ENCODE measurements at regions of chr6 and their contacts with region 1.

Region 1: GRCh38 chr6:36912586-36912985 is 26.8 kb downstream of the C6orf89 start:
- DNase-seq: peak; percentile 72
- H3K4me3 Mint-ChIP-seq: peak overlapping the region; percentile 5
- H3K27ac Mint-ChIP-seq: peak overlapping the region; percentile 71
- H3K4me1 Mint-ChIP-seq: peaks cover 40% of the 10 kb centered on the region
- H3K27me3 Mint-ChIP-seq: no peaks in the 10 kb centered on the region

Region 2: GRCh38 chr6:36874443-36875249 is 37.9 kb before region 1 on chr6 and contains the start of gene PPIL1:
- CTCF ChIA-PET with region 1: no interaction called
- intact Hi-C with region 1: no loop called
- DNase-seq: peak; percentile 88
- H3K4me3 Mint-ChIP-seq: peak within 1 kb of the TSS; percentile 94
- H3K27ac Mint-ChIP-seq: peak within 1 kb of the TSS; percentile 98
- H3K4me1 Mint-ChIP-seq: peaks cover 39% of the 10 kb centered on the region
- H3K27me3 Mint-ChIP-seq: peaks cover 8% of the 10 kb centered on the region
- total RNA-seq, gene PPIL1: 42.8 to 44.0 TPM

Region 3: GRCh38 chr6:36885461-36886401 is 26.9 kb before region 1 on chr6 and contains the start of gene C6orf89:
- CTCF ChIA-PET with region 1: interaction called, 9 read pairs
- intact Hi-C with region 1: loop called (anchors 1 kb)
- DNase-seq: peak; percentile 99
- H3K4me3 Mint-ChIP-seq: peak within 1 kb of the TSS; percentile 87
- H3K27ac Mint-ChIP-seq: peak within 1 kb of the TSS; percentile 92
- H3K4me1 Mint-ChIP-seq: peaks cover 33% of the 10 kb centered on the region
- H3K27me3 Mint-ChIP-seq: no peaks in the 10 kb centered on the region
- total RNA-seq, gene C6orf89: 24.2 to 24.5 TPM

Region 4: GRCh38 chr6:36962874-36963273 is 50.3 kb after region 1 on chr6:
- CTCF ChIA-PET with region 1: no interaction called
- intact Hi-C with region 1: loop called (anchors 5 kb)
- DNase-seq: peak; percentile 90
- H3K4me3 Mint-ChIP-seq: peak overlapping the region; percentile 9
- H3K27ac Mint-ChIP-seq: peak overlapping the region; percentile 39
- H3K4me1 Mint-ChIP-seq: peaks cover 30% of the 10 kb centered on the region
- H3K27me3 Mint-ChIP-seq: no peaks in the 10 kb centered on the region

Region 5: GRCh38 chr6:36985808-36986703 is 73.5 kb after region 1 on chr6 and contains the start of gene MTCH1:
- CTCF ChIA-PET with region 1: no interaction called
- intact Hi-C with region 1: loop called (anchors 2 kb)
- DNase-seq: peak; percentile 85
- H3K4me3 Mint-ChIP-seq: peak within 1 kb of the TSS; percentile 97
- H3K27ac Mint-ChIP-seq: peak within 1 kb of the TSS; percentile 91
- H3K4me1 Mint-ChIP-seq: peaks cover 19% of the 10 kb centered on the region
- H3K27me3 Mint-ChIP-seq: no peaks in the 10 kb centered on the region
- total RNA-seq, gene MTCH1: 97.4 to 101 TPM